ENCODE measurements at regions of chr3 and their contacts with region 1.

Region 1: GRCh38 chr3:173761161-173761560 is 363.6 kb downstream of the NLGN1 start:
- DNase-seq: no peak
- H3K27ac ChIP-seq: no peak overlapping the region
- CTCF ChIP-seq: no peak

Region 2: GRCh38 chr3:173745952-173746682 is 15.0 kb before region 1 on chr3:
- CTCF ChIA-PET with region 1: interaction called, 12 read pairs
- POLR2A ChIA-PET with region 1: no interaction called
- DNase-seq: peak; percentile 45
- H3K27ac ChIP-seq: no peak overlapping the region
- CTCF ChIP-seq: no peak